Psoas muscle (tissue), 8 donors: ENCODE measurements at regions of chr3 and their contacts with region 1.

Region 1: DNA sequence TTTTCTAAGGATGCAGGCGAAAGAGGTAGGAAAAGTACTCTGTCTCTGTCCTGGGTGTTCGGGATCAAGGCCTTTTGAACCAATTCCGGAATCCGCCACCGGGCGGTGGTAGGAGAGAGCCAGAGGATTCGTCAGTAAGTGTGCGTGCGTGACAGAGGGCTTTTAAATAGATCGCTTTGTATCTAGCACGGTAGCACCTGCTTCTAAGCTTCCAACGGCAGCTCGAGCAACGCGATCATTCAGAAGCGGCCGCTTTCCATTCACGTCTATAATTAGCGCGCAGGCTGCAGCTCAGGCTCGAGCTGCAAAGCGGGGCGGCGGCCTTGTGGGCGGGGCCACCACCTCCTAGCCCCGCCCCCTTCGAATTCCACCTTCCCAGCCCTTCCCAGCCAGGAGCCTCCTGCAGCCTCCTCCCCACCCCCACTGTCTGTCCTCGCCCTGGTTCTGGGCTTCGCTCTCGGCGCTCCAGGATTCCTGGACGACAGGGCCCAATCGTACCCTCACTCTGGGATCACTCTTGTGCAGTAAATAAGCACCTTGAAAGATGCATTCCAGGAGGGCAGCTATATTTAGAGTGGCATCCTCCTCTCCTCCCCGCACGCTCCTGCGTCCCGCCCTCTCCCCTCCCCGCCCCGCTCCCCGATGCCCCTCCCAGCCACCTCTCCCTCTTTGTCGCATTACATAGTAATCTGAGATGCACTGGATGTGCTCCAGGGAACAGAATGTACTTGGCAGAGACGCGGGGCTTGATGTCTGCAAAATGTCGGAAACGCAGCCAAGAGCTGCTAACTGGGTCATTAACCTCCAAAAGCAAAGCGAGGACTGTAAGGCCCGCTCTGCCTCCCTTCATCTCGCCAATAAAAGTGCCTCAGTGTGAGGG is 224.1 kb upstream of the TPRG1 start:
- DNase-seq: peak; percentile 93 to 96
- ATAC-seq: peak; percentile 85 to 87 (median 86)
- H3K4me3 ChIP-seq: peak overlapping the region; percentile 53
- H3K27ac ChIP-seq: peak overlapping the region; percentile 94
- H3K4me1 ChIP-seq: peaks cover 44% of the 10 kb centered on the region
- H3K27me3 ChIP-seq: no peaks in the 10 kb centered on the region
- CTCF ChIP-seq: peak; percentile 52

Region 2: DNA sequence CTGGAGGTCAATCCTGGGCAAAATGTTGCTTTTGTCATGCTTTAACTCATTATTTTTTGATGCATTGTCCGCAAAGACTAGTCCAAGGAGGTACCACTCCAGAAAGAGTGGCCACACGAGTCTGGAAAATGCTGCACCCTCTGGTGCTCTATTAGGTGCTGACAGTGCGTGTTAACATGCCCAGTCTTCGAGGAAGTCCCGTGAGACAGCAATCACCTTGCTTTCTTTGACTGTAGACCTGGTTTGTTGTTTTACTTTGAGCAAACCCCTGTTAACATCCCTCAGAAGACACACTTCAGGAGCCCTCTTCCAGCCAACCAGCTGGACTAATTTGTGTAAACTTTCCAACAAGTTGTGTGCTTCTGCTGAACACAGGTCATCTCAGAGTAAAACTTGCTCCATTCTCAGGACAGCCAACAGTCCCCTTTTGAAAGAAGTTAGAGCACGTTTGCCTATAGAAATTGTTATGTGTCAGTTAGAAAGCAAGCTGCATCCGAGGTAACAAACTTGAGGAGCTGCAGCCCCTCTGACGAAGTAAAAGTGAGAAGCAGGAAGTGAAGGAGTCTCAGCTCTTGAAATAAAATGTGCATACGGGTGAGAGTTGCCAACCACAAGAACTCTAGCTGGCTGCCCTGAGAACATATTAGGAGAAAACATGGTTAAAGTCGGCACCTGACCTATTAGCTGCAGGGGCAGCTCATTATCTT is 588.7 kb before region 1 on chr3:
- intact Hi-C with region 1: loop called in 1 of 2 experiments (anchors 10 kb)
- DNase-seq: no peak
- ATAC-seq: no peak
- H3K4me3 ChIP-seq: no peak overlapping the region
- H3K27ac ChIP-seq: no peak overlapping the region
- H3K4me1 ChIP-seq: peaks cover 45% of the 10 kb centered on the region
- H3K27me3 ChIP-seq: no peaks in the 10 kb centered on the region
- CTCF ChIP-seq: no peak

Region 3: DNA sequence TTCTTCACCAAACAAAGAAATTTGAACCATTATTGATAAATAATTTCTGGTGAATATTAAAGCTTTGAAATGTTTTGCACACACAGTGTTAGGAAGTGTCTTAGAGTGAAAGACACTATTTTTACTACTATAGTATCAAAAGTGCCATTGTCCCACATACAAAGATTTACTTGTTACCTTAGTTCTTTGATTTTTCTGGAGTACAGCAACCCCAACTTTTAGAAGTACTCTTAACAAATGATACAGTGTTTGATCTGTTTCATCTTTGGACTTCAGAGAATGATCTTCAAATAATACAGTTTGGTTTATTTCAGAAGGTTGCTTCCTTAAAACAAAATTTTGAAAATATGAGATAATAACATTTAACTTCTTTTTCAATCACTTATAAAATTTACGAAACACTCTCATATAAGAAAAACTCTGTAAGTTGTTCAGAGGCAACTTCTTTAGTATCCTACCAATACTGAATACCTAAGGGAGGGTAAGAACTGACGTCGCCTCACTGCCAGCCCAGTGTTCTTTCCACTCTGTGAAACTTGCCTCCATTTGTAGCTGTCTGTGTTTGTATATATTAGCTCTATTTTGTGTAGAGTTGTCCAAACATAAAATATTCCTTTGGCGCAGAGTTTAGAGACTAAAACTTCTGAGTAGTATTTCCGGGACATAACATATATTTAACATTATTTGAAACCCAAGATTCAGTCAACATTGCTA is 329.5 kb before region 1 on chr3:
- intact Hi-C with region 1: loop called in 1 of 2 experiments (anchors 10 kb)
- DNase-seq: no peak
- ATAC-seq: no peak
- H3K4me3 ChIP-seq: no peak overlapping the region
- H3K27ac ChIP-seq: no peak overlapping the region
- H3K4me1 ChIP-seq: no peaks in the 10 kb centered on the region
- H3K27me3 ChIP-seq: no peaks in the 10 kb centered on the region
- CTCF ChIP-seq: no peak

Region 4: DNA sequence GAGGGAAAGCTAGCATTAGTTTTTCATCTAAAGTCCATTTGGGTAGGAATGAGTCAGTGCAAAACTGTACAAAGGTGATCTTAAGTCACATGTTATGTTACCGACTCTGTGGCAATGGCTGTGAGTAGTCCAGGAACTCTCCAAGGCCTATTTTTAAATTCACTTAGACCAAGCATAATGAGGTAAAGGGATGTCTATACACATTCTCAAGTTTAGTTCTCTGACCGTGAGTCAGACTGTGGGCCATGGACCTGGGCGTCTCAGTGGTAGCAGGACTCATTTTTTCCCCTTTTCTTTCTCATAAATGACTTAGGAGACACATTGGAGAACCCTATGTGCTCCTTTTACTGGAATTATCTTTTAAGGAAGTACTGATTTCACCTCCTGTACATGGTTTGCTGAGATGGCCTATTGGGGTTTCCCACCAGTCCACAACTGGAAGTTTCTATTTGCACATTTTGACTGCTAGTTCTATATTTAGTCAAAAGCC is 264.6 kb before region 1 on chr3:
- intact Hi-C with region 1: loop called in 1 of 2 experiments (anchors 5 kb)
- DNase-seq: peak; percentile 32 to 66
- ATAC-seq: peak; percentile 96 to 98 (median 96)
- H3K4me3 ChIP-seq: no peak overlapping the region
- H3K27ac ChIP-seq: peak overlapping the region; percentile 75
- H3K4me1 ChIP-seq: peaks cover 56% of the 10 kb centered on the region
- H3K27me3 ChIP-seq: no peaks in the 10 kb centered on the region
- CTCF ChIP-seq: no peak

Region 5: GRCh38 chr3:189148081-189148507 is 200.5 kb after region 1 on chr3:
- intact Hi-C with region 1: loop called in 1 of 2 experiments (anchors 2 kb)
- DNase-seq: peak; percentile 33 to 64
- ATAC-seq: peak; percentile 76 to 89 (median 80)
- H3K4me3 ChIP-seq: no peak overlapping the region
- H3K27ac ChIP-seq: peak overlapping the region; percentile 48
- H3K4me1 ChIP-seq: peaks cover 26% of the 10 kb centered on the region
- H3K27me3 ChIP-seq: no peaks in the 10 kb centered on the region
- CTCF ChIP-seq: peak; percentile 78

Region 6: DNA sequence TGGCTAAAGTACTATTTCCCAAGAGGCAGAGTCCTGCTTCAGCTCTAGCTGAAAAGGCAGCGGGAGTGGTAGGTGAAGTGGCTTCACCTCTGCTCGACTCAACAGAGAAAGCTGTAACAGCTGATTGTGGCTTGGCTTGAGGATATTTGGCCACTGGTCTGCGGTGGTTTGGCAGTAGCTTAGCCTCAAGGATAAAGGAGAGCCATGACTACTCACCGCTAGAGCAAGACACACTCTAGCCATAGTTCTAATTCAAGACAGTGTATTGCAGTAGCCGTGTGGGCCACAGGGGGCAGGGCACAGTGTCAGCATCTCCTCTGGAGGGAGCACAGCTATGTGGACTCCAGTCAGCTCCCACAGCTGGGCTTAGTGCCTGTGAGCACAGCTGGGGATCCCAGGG is 247.7 kb after region 1 on chr3:
- intact Hi-C with region 1: no loop called
- DNase-seq: no peak
- ATAC-seq: peak in 3 of 4 donors; percentile 73 to 84 (median 76)
- H3K4me3 ChIP-seq: no peak overlapping the region
- H3K27ac ChIP-seq: no peak overlapping the region
- H3K4me1 ChIP-seq: no peaks in the 10 kb centered on the region
- H3K27me3 ChIP-seq: no peaks in the 10 kb centered on the region
- CTCF ChIP-seq: peak; percentile 20